ENCODE measurements at regions of chr5 and their contacts with region 1.

Region 1: DNA sequence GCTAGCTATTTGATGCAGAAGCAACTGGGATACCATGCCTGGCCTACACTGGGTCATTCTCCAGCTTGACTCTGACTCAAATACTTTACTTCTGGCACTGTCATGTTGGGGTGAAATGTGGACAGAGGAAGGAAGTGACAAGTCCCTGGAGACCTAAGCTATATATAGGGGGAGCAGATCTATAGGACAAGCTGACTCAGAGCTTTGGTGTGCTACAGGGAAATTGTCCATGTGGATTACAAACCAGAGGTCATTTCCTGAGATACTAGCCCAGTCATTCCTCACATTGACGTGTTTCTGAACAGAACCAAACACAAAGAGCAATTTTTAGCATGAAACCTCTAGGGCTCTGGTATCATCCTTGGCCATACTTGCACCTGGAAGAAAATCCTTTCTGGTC is 531.6 kb upstream of the CLINT1 start:
- DNase-seq: peak; percentile 95
- H3K4me3 ChIP-seq: no peak overlapping the region
- H3K27ac ChIP-seq: peak overlapping the region; percentile 74
- H3K4me1 ChIP-seq: peaks cover 40% of the 10 kb centered on the region
- H3K27me3 ChIP-seq: no peaks in the 10 kb centered on the region
- CTCF ChIP-seq: no peak
- POLR2A ChIP-seq: peak; percentile 62

Region 2: DNA sequence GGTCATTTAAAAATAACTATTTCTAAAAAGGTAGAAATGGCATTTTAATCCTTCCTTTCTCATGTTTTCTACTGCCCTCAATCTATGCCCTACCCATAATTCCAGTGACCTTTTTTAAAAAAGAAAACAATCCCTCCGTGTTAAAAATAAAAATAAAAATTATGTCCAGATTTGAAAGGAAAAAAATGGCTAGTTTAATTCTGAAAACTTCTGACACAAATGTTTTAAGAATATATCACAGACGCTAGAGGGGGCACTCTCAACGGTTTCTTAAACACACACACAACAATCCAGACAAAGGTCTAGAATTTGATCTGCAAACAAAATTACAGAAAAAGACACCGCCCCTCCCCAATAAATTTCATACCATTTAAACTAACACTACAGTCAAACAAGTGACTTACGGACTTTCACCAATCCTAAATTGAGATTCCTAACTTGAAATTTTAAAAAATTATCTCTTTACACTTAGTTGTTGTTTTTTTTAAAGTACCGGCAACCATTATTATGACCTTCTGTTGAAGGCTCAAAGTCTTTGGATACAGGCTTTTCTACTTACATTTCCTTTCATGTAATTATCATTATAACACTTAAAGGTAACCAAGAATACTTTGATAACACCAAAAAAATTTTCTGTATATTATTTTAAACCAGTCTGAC is 569.9 kb before region 1 on chr5:
- CTCF ChIA-PET with region 1: no interaction called
- POLR2A ChIA-PET with region 1: no interaction called
- dilution Hi-C with region 1: no loop called
- intact Hi-C with region 1: loop called (anchors 10 kb)
- DNase-seq: peak; percentile 80
- H3K4me3 ChIP-seq: no peak overlapping the region
- H3K27ac ChIP-seq: no peak overlapping the region
- H3K4me1 ChIP-seq: peaks cover 14% of the 10 kb centered on the region
- H3K27me3 ChIP-seq: no peaks in the 10 kb centered on the region
- CTCF ChIP-seq: peak; percentile 36 to 39
- POLR2A ChIP-seq: no peak

Region 3: GRCh38 chr5:158119961-158120723 is 270.4 kb before region 1 on chr5:
- CTCF ChIA-PET with region 1: no interaction called
- POLR2A ChIA-PET with region 1: no interaction called
- dilution Hi-C with region 1: no loop called
- intact Hi-C with region 1: loop called (anchors 5 kb)
- DNase-seq: peak; percentile 83
- H3K4me3 ChIP-seq: no peak overlapping the region
- H3K27ac ChIP-seq: peak overlapping the region; percentile 49
- H3K4me1 ChIP-seq: no peaks in the 10 kb centered on the region
- H3K27me3 ChIP-seq: no peaks in the 10 kb centered on the region
- CTCF ChIP-seq: no peak
- POLR2A ChIP-seq: no peak

Region 4: GRCh38 chr5:158456756-158457155 is 66.2 kb after region 1 on chr5:
- CTCF ChIA-PET with region 1: no interaction called
- POLR2A ChIA-PET with region 1: no interaction called
- dilution Hi-C with region 1: no loop called
- intact Hi-C with region 1: loop called (anchors 1 kb)
- DNase-seq: peak; percentile 61
- H3K4me3 ChIP-seq: no peak overlapping the region
- H3K27ac ChIP-seq: no peak overlapping the region
- H3K4me1 ChIP-seq: no peaks in the 10 kb centered on the region
- H3K27me3 ChIP-seq: no peaks in the 10 kb centered on the region
- CTCF ChIP-seq: no peak
- POLR2A ChIP-seq: no peak

Region 5: GRCh38 chr5:158958021-158958994 is 567.7 kb after region 1 on chr5:
- CTCF ChIA-PET with region 1: no interaction called
- POLR2A ChIA-PET with region 1: no interaction called
- dilution Hi-C with region 1: no loop called
- intact Hi-C with region 1: no loop called
- DNase-seq: no peak
- H3K4me3 ChIP-seq: no peak overlapping the region
- H3K27ac ChIP-seq: no peak overlapping the region
- H3K4me1 ChIP-seq: no peaks in the 10 kb centered on the region
- H3K27me3 ChIP-seq: peaks cover 0 to 1% of the 10 kb centered on the region in 2 experiments
- CTCF ChIP-seq: no peak
- POLR2A ChIP-seq: no peak

Region 6: DNA sequence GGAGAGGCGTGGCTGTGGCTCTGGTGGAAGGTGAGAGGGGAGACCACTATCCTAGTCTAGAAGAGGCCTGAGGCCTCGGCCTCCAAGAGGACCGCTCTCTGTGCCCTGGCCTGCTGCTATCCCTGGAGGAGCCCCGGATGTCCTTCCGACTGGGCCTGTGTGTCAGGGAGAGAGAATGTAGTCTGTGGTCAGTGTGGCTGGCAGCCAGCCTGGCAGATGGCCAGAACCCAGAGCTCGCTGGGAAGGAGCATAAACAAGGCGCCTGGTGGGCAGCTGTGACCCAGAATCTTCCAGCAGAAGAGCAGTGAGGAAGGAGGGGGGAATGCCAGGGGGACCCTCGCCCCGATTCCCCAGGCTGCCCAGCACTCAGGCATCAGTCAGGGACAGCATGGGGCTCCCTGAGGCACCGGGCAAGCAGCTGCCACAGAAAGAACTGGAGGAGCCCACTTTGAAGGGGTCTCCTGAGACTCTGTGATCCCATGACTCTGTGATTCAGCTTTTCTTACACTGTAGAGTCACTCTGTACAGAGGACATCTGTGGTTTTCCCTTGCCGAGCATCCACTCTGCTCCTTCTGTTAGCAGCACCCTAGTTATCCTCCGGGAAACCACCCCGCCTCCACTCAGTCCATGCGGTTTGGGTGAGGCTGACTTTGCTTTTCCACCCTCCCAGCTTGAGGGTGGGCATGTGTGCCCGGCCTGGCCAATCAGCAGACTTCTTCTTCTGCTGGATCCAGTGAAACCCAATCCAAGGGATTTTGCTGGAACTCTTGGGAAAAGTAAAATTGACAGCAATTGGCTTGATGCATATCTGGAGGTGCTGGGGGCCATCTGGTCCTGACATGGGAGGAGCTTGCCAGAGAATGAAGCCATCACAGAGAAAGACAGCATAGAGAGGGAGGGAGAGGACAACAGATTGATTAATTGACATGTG is 1774.8 kb after region 1 on chr5:
- CTCF ChIA-PET with region 1: no interaction called
- POLR2A ChIA-PET with region 1: no interaction called
- dilution Hi-C with region 1: no loop called
- intact Hi-C with region 1: loop called (anchors 10 kb)
- DNase-seq: peak; percentile 86
- H3K4me3 ChIP-seq: no peak overlapping the region
- H3K27ac ChIP-seq: peak overlapping the region; percentile 89
- H3K4me1 ChIP-seq: peaks cover 44% of the 10 kb centered on the region
- H3K27me3 ChIP-seq: no peaks in the 10 kb centered on the region
- CTCF ChIP-seq: no peak
- POLR2A ChIP-seq: peak; percentile 73